CD4-positive, alpha-beta memory T cell (primary cell): ENCODE measurements at regions of chr11 and their contacts with region 1.

Region 1: GRCh38 chr11:43880640-43881159 is at the start of gene ALKBH3:
- DNase-seq: peak; percentile 87 to 93 (median 89)
- H3K4me3 ChIP-seq: peak within 1 kb of the TSS; percentile 86 to 92
- H3K4me3 Mint-ChIP-seq: peak within 1 kb of the TSS; percentile 88 to 98 (median 96)
- H3K27ac ChIP-seq: peak within 1 kb of the TSS; percentile 64
- H3K27ac Mint-ChIP-seq: peak within 1 kb of the TSS; percentile 75 to 96 (median 92)
- H3K4me1 ChIP-seq: peaks cover 19% of the 10 kb centered on the region
- H3K4me1 Mint-ChIP-seq: peaks cover 17 to 41% (median 27%) of the 10 kb centered on the region in 4 donors
- H3K27me3 ChIP-seq: peaks cover 8% of the 10 kb centered on the region
- H3K27me3 Mint-ChIP-seq: peaks cover 13 to 25% of the 10 kb centered on the region in 2 donors
- total RNA-seq, gene ALKBH3: 34.1 to 39.6 TPM

Region 2: DNA sequence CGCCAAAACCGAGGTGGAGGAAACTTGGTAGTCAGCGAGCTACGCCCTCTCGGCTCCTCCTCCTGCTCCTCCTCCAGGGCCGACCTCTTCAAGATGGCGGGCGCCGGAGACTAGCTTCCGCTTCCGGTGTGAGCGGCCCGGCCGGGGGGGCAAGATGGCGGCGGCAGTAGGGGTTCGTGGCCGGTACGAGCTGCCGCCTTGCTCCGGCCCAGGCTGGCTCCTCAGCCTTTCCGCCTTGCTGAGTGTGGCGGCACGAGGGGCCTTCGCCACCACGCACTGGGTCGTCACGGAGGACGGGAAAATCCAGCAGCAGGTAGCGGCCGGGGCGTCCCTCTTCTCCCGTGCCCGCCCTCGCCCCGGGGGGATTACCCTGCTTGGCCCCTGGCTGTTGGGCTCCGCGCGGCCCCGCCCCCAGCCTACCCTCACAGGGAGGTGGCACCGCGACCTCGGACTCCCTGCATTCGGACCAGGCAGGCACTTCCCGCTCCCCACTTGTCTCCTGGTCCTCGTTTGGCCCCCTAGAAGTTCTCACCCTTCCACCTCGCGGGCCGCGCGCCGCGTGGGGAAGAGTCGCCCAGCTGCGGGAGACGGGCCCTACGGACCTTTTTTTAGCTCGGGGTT is 521.8 kb before region 1 on chr11 and contains the start of gene TTC17:
- CTCF ChIA-PET with region 1: no interaction called
- POLR2A ChIA-PET with region 1: no interaction called
- intact Hi-C with region 1: loop called (anchors 1 kb)
- DNase-seq: peak; percentile 89 to 95 (median 90)
- H3K4me3 ChIP-seq: peak within 1 kb of the TSS; percentile 51 to 89
- H3K4me3 Mint-ChIP-seq: peak within 1 kb of the TSS; percentile 94 to 100 (median 99)
- H3K27ac ChIP-seq: peak within 1 kb of the TSS; percentile 92
- H3K27ac Mint-ChIP-seq: peak within 1 kb of the TSS; percentile 96 to 99 (median 98)
- H3K4me1 ChIP-seq: peaks cover 32% of the 10 kb centered on the region
- H3K4me1 Mint-ChIP-seq: peaks cover 31 to 60% (median 47%) of the 10 kb centered on the region in 4 donors
- H3K27me3 ChIP-seq: no peaks in the 10 kb centered on the region
- H3K27me3 Mint-ChIP-seq: no peaks in the 10 kb centered on the region
- total RNA-seq, gene TTC17: 105 to 112 TPM

Region 3: GRCh38 chr11:43643898-43644620 is 236.6 kb before region 1 on chr11:
- CTCF ChIA-PET with region 1: no interaction called
- POLR2A ChIA-PET with region 1: no interaction called
- intact Hi-C with region 1: loop called (anchors 2 kb)
- DNase-seq: peak; percentile 84 to 87 (median 85)
- H3K4me3 ChIP-seq: peak overlapping the region; percentile 75 to 90
- H3K4me3 Mint-ChIP-seq: peak overlapping the region; percentile 88 to 97 (median 94)
- H3K27ac ChIP-seq: peak overlapping the region; percentile 71
- H3K27ac Mint-ChIP-seq: peak overlapping the region; percentile 82 to 95 (median 93)
- H3K4me1 ChIP-seq: peaks cover 17% of the 10 kb centered on the region
- H3K4me1 Mint-ChIP-seq: peaks cover 12 to 17% (median 15%) of the 10 kb centered on the region in 4 donors
- H3K27me3 ChIP-seq: peaks cover 9% of the 10 kb centered on the region
- H3K27me3 Mint-ChIP-seq: peaks cover 12 to 18% of the 10 kb centered on the region in 2 donors

Region 4: GRCh38 chr11:43830928-43831440 is 49.7 kb before region 1 on chr11:
- CTCF ChIA-PET with region 1: no interaction called
- POLR2A ChIA-PET with region 1: no interaction called
- intact Hi-C with region 1: no loop called
- DNase-seq: no peak
- H3K4me3 ChIP-seq: no peak overlapping the region
- H3K4me3 Mint-ChIP-seq: no peak overlapping the region
- H3K27ac ChIP-seq: no peak overlapping the region
- H3K27ac Mint-ChIP-seq: no peak overlapping the region
- H3K4me1 ChIP-seq: no peaks in the 10 kb centered on the region
- H3K4me1 Mint-ChIP-seq: no peaks in the 10 kb centered on the region
- H3K27me3 ChIP-seq: no peaks in the 10 kb centered on the region
- H3K27me3 Mint-ChIP-seq: no peaks in the 10 kb centered on the region

Region 5: DNA sequence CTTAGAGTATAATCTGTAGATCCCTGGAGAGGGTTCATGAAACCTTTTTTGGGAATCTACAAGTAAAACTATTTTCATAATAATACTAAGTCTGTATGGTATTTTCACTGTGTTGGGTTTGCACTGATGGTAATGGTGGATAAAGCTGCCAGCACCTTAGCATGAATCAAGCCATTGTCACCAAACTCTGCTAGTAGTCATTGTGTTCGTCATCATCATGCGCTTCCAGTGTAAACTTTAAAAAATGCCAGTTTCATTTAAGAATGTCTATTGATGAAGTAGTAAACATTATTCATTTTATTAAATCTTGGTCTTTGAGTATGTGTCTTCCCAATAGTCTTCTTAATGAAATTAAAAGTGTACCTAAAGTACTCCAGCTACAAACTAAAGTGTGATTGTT is 14.9 kb after region 1 on chr11:
- CTCF ChIA-PET with region 1: interaction called, 20 read pairs
- POLR2A ChIA-PET with region 1: interaction called, 4 read pairs
- intact Hi-C with region 1: no loop called
- DNase-seq: no peak
- H3K4me3 ChIP-seq: no peak overlapping the region
- H3K4me3 Mint-ChIP-seq: no peak overlapping the region
- H3K27ac ChIP-seq: no peak overlapping the region
- H3K27ac Mint-ChIP-seq: peak overlapping the region in 1 of 7 donors; percentile 77
- H3K4me1 ChIP-seq: no peaks in the 10 kb centered on the region
- H3K4me1 Mint-ChIP-seq: peaks cover 0 to 7% (median 4%) of the 10 kb centered on the region in 4 donors
- H3K27me3 ChIP-seq: no peaks in the 10 kb centered on the region
- H3K27me3 Mint-ChIP-seq: no peaks in the 10 kb centered on the region

Region 6: DNA sequence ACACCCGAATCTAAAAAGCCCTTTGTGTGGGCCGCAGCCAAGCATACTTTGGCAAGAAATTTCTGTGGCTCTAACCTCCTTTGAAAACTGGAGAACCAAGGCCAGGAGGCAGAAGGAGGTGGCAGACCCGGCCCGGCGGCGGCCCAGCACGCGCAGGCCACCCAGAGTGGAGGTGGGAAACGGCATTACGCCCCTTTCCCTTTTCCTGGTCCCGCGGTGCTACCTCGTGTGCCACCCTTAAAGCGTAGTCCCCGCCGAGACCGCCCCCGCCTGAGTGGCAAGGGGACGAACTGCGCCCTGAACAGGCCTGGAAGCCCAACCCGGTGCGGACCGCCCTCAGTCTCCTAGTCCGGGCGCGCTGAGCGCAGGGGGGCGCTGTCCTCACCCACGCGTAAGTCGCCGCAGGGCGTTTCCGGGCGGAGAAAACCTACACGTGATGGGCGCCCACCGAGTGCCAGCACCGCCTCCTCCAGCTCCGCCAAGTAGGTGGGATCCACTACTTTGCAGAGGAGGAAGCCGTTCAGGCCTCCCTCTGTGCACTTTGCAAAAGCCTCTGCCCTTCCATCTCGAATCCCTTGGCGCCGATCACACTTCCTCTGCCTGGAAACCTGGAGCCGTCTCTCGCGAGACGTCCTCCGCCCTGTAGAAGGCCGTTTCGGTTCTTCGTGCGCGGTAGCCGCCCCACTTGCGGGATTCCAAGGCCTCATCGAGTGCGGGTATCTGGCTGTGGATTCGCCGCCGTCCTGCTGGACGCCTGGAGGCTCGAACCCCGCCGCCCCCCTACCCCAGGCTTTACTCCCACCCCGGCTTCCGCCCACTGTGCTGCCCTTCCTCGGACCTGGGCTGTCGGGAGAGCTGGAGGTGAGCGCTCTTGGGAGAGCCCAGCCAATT is 185.4 kb after region 1 on chr11 and contains the start of gene ACCS:
- CTCF ChIA-PET with region 1: no interaction called
- POLR2A ChIA-PET with region 1: no interaction called
- intact Hi-C with region 1: loop called (anchors 1 kb)
- DNase-seq: peak; percentile 87 to 93 (median 89)
- H3K4me3 ChIP-seq: peak within 1 kb of the TSS; percentile 79 to 86
- H3K4me3 Mint-ChIP-seq: peak within 1 kb of the TSS; percentile 89 to 98 (median 94)
- H3K27ac ChIP-seq: peak within 1 kb of the TSS; percentile 63
- H3K27ac Mint-ChIP-seq: peak within 1 kb of the TSS; percentile 91 to 95 (median 94)
- H3K4me1 ChIP-seq: peaks cover 17% of the 10 kb centered on the region
- H3K4me1 Mint-ChIP-seq: peaks cover 5 to 54% (median 31%) of the 10 kb centered on the region in 4 donors
- H3K27me3 ChIP-seq: no peaks in the 10 kb centered on the region
- H3K27me3 Mint-ChIP-seq: no peaks in the 10 kb centered on the region
- total RNA-seq, gene ACCS: 74.9 to 78.9 TPM

Region 7: DNA sequence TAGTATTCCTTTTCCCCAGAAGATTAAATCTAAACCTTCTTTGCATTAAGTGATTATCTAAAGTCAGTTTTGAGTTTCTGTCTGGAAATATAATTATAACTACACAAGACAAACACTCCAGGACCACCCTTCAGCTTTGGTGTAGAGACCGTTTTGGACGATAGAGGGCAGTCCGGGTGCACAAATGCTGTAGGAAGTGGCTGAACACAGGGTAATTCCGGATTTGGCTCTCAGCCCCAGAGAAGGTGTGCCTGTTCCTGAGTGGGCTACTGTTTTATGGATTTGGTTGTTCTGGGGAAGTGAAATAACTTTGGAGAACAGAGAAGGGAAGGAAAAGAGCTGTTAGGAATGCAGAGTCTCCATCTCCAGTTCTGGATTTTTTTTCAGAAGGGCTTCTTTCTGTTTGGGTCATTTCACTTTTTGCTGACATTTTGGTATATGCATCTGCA is 229.6 kb after region 1 on chr11:
- CTCF ChIA-PET with region 1: no interaction called
- POLR2A ChIA-PET with region 1: no interaction called
- intact Hi-C with region 1: no loop called
- DNase-seq: peak; percentile 31 to 44 (median 39)
- H3K4me3 ChIP-seq: no peak overlapping the region
- H3K4me3 Mint-ChIP-seq: no peak overlapping the region
- H3K27ac ChIP-seq: no peak overlapping the region
- H3K27ac Mint-ChIP-seq: peak overlapping the region in 5 of 7 donors; percentile 65 to 89 (median 87)
- H3K4me1 ChIP-seq: peaks cover 4% of the 10 kb centered on the region
- H3K4me1 Mint-ChIP-seq: peaks cover 6 to 8% (median 7%) of the 10 kb centered on the region in 4 donors
- H3K27me3 ChIP-seq: no peaks in the 10 kb centered on the region
- H3K27me3 Mint-ChIP-seq: no peaks in the 10 kb centered on the region